Activated CD8-positive, alpha-beta T cell treated with anti-CD3 and anti-CD28 coated beads, Interleukin-2, amount 10 ng/mL, durations not matched to agents 7 days and 5 days (primary cell): ENCODE measurements at regions of chr2 and their contacts with region 1.

Region 1: DNA sequence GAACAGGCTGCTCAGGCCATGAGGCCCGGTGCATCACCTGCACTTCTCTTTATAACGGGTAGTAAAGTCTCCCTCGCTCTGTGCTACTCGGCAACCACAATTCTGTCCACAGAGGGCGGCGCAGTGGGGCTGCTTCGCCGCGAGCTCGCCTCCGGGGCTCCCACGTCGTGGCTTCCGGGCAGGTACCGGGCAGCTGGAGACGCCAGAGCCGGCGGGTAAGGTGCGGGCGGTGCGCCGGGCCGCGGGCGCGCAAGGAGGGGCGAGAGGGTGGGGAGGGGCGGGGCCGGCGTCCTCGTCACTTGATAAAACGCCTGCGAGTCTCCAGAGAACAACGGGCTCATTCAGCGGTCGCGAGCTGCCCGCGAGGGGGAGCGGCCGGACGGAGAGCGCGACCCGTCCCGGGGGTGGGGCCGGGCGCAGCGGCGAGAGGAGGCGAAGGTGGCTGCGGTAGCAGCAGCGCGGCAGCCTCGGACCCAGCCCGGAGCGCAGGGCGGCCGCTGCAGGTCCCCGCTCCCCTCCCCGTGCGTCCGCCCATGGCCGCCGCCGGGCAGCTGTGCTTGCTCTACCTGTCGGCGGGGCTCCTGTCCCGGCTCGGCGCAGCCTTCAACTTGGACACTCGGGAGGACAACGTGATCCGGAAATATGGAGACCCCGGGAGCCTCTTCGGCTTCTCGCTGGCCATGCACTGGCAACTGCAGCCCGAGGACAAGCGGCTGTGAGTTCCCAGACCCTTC is at the start of gene ITGA6:
- DNase-seq: peak; percentile 79
- ATAC-seq: peak; percentile 78
- H3K4me3 Mint-ChIP-seq: peak within 1 kb of the TSS; percentile 78
- H3K27ac Mint-ChIP-seq: peak within 1 kb of the TSS; percentile 53
- H3K4me1 Mint-ChIP-seq: peaks cover 30% of the 10 kb centered on the region
- H3K27me3 Mint-ChIP-seq: peaks cover 53% of the 10 kb centered on the region
- total RNA-seq, gene ITGA6: 14.6 to 15.0 TPM

Region 2: DNA sequence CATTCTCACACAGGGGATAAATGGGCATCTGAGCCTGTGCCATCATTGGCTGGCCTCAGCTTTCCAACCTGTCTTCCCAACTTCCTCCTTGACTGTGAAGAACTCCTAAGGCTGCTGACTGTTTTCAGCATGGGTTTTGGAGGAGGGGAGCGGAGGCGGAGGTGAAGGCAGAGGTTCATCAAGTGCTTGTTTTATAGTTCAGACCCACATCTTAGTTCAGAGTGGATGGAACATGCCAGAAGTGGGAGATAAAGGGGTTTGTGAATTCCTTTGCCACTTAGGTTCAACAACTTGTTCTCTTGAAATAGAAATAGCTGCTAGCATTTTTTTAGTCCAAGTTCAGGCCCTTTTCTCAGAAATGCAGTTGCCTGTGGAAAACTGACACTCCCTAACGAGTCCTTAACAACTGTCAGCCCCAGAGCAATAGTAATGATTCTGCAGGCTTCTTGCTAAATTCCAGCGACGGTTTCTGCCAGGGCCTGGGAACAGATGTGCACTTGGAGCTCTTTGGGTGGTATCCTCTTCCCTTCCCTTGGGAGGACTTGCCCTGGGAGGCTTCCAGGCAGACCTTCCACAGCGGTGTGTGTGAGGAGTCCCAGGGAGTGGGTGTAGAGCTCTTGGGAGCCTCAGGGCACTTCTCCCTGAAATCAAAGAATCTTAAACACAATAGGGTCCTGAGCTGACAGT is 30.1 kb before region 1 on chr2:
- CTCF ChIA-PET with region 1: no interaction called
- POLR2A ChIA-PET with region 1: no interaction called
- DNase-seq: no peak
- ATAC-seq: no peak
- H3K4me3 Mint-ChIP-seq: no peak overlapping the region
- H3K27ac Mint-ChIP-seq: no peak overlapping the region
- H3K4me1 Mint-ChIP-seq: peaks cover 7% of the 10 kb centered on the region
- H3K27me3 Mint-ChIP-seq: peaks cover 14% of the 10 kb centered on the region

Region 3: GRCh38 chr2:172438741-172439508 is 11.5 kb after region 1 on chr2:
- CTCF ChIA-PET with region 1: interaction called, 15 read pairs
- POLR2A ChIA-PET with region 1: no interaction called
- DNase-seq: no peak
- ATAC-seq: no peak
- H3K4me3 Mint-ChIP-seq: no peak overlapping the region
- H3K27ac Mint-ChIP-seq: no peak overlapping the region
- H3K4me1 Mint-ChIP-seq: peaks cover 59% of the 10 kb centered on the region
- H3K27me3 Mint-ChIP-seq: no peaks in the 10 kb centered on the region

Region 4: DNA sequence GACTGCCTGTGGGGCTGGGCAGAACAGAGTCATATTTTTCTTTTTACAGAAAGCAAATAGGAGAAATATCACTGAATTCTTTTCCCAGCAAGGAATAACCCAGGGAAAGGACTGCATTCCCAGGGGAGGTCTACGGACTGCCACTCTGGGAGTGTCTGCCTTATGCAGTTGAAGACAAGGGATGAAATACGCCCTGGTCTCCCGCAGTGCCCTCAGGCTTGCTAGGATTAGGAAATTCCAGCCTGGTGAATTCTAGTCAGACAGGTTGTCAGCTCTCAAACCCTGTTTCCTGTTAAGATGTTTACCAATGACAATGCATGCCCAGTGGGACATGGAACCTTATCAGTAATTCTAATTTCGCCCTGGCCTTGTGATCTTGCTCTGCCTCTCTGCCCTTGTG is 98.2 kb after region 1 on chr2:
- CTCF ChIA-PET with region 1: no interaction called
- POLR2A ChIA-PET with region 1: no interaction called
- DNase-seq: no peak
- ATAC-seq: no peak
- H3K4me3 Mint-ChIP-seq: no peak overlapping the region
- H3K27ac Mint-ChIP-seq: no peak overlapping the region
- H3K4me1 Mint-ChIP-seq: no peaks in the 10 kb centered on the region
- H3K27me3 Mint-ChIP-seq: no peaks in the 10 kb centered on the region